Posterior vena cava (tissue), 2 donors: ENCODE measurements at regions of chr12 and their contacts with region 1.

Region 1: GRCh38 chr12:76670776-76671175 is 93.1 kb upstream of the ZDHHC17 start:
- DNase-seq: no peak

Region 2: DNA sequence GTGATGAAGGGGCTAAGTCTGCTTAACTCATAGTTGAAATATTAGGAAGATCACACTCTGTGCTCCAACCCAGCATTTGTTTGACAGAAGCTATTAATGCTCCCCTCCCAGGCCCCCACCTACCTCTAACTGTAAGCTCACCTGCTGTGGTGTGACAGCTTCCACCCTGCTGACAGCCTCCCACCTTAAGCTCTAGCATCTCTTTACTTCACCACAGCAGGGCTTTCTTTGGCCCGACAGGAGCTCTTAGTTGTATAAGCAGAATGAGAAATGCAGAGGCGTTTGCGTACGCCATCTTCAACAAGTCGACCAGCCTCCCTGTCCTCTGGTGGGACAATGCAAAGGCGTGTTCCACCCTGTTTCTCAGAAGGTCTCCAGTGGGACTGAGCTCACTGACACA is 31.1 kb before region 1 on chr12:
- intact Hi-C with region 1: loop called in 1 of 2 experiments (anchors 1 kb)
- DNase-seq: no peak

Region 3: GRCh38 chr12:76697849-76698248 is 27.1 kb after region 1 on chr12:
- intact Hi-C with region 1: no loop called
- DNase-seq: no peak